Right ventricle myocardium inferior (tissue), 1 donor: ENCODE measurements at regions of chr4 and their contacts with region 1.

Region 1: GRCh38 chr4:147173797-147174432 is 228.3 kb upstream of the TTC29 start:
- DNase-seq: peak; percentile 35
- ATAC-seq: peak; percentile 99

Region 2: DNA sequence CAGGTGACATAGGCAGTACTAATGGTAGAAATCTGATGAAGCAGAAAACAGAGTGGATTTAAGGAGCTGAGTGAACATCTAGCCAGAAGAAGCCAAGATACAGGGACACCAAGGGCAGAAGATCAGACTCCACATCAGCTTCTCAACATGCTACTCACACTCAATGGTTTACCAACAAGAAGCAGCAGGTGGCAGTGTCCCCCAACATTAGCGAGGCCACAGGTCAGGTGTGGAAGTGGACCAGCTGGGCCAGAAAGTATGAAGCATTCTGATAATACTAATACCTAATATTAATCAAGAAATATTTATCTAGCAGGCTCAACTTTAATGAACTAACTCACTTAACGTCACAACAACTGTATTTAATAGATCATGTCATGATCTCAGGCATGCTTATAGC is 154.9 kb before region 1 on chr4:
- intact Hi-C with region 1: no loop called
- DNase-seq: peak; percentile 66
- ATAC-seq: peak; percentile 84

Region 3: DNA sequence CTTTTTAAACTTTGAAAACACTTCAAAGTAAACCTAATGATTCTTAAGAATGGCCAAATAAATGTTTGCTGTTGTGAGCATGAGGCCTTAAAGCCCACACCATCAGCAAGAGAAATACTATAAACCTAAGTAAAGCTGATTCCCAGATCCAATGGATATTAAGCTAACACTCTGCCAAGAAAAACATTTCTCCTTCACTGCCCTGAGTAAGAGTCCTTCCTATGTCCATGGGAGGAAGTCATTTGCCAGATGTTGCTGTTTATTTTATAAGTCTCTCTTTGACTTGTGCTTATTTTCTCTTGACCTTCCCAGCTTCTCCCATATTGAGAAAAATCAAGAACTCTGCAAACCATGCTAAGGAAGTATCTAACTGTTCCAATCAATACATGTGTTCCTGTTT is 152.7 kb after region 1 on chr4:
- intact Hi-C with region 1: loop called (anchors 10 kb)
- DNase-seq: no peak
- ATAC-seq: peak; percentile 51

Region 4: DNA sequence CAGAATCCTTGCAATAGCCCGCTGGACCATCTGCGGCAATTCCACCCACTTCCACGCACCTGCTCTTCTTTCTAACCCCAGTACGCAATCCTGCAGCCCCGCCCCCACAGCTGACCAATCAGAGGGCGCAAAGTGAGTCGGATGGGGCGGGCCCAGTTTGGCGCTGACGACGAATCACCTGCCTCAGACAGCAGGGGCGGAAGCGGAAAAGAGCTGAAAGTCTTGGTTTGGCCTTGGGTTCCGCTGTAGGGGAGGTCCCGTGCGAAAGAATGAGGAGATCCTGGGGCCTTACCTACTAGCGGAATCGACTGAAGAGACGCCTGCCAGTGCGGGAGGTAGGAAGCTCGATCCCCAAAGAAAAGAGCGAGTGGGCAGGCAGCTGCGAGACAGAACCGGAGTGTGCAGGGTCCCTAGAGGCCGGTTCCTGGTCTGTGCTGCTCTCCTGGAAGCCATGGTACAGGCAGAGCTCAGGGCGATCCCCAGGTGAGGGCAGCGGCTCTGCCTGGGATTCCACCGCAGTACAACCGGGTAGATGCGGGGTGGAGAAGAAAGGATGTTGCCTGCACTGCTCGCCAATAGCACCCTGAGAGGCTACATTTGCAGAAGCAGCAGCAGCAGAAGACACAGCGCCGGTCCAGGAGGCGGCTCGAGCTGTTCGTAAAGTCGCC is 443.4 kb after region 1 on chr4 and contains the start of gene TMEM184C:
- intact Hi-C with region 1: no loop called
- DNase-seq: peak; percentile 100
- ATAC-seq: peak; percentile 99
- total RNA-seq, gene TMEM184C: 26.4 TPM